K562 (cell line): ENCODE measurements at regions of chr12 and their contacts with region 1.

Region 1: DNA sequence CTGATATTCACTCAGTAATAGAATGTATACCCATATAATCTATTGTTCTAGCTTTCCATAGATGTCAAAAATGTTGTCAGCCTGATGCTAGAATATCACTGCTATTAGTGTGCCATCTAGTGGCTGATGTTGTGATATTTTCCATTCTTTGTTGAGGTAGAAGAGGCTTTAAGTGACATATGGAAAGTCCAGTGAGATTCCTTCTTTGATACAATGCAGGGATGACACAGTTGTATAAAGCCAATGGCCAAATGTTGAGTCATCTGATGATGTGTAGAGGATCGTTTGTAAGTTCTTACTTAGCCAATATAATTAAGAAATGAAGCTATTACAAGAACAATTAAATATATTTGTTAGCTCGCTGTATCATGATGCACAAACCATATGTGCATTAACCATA is 58.1 kb upstream of the PCED1B start:
- DNase-seq: peak; percentile 30 to 59 (median 34)
- ATAC-seq: peak; percentile 81
- H3K4me3 ChIP-seq: no peak overlapping the region
- H3K27ac ChIP-seq: no peak overlapping the region
- H3K4me1 ChIP-seq: no peaks in the 10 kb centered on the region
- H3K27me3 ChIP-seq: 0 out of 5 replicates have a peak, but pooled peaks cover 0 to 4% of the 10 kb centered on the region in 2 experiments
- CTCF ChIP-seq: peak; percentile 41 to 74 (median 64); a peak in 5 of 6 replicates
- EP300 ChIP-seq: no peak
- POLR2A ChIP-seq: no peak
- RAD21 ChIP-seq: peak; percentile 75 to 89

Region 2: GRCh38 chr12:46071769-46072624 is 949.3 kb before region 1 on chr12:
- CTCF ChIA-PET with region 1: no interaction called
- POLR2A ChIA-PET with region 1: no interaction called
- in situ Hi-C with region 1: no loop called
- intact Hi-C with region 1: loop called (anchors 5 kb)
- DNase-seq: peak; percentile 52 to 78 (median 62)
- ATAC-seq: peak; percentile 99
- H3K4me3 ChIP-seq: no peak overlapping the region
- H3K27ac ChIP-seq: no peak overlapping the region
- H3K4me1 ChIP-seq: no peaks in the 10 kb centered on the region
- H3K27me3 ChIP-seq: no peaks in the 10 kb centered on the region
- CTCF ChIP-seq: peak; percentile 94 to 97 (median 96)
- EP300 ChIP-seq: no peak
- POLR2A ChIP-seq: no peak
- RAD21 ChIP-seq: peak; percentile 91 to 92

Region 3: DNA sequence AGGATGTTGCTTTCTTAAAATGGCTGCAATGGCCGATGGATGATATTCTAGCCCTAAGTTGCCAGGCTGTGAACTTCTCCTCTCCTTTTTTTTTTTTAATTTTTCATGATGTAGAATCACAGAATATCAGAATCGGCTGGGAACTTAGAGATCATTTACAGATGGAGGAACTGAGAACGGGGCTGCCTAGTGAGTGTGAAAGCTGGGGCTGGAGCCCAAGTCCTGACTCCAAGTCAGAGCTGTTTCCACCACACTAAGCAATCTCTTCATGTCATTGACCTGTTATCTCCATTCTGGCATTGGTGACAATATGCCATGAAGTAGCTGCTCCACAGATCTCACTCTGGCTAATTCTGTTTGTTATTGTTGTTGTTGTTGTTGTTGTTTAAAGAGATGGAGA is 874.2 kb before region 1 on chr12:
- CTCF ChIA-PET with region 1: no interaction called
- POLR2A ChIA-PET with region 1: no interaction called
- in situ Hi-C with region 1: loop called (anchors 25 kb)
- intact Hi-C with region 1: loop called (anchors 10 kb)
- DNase-seq: no peak
- ATAC-seq: no peak
- H3K4me3 ChIP-seq: no peak overlapping the region
- H3K27ac ChIP-seq: no peak overlapping the region
- H3K4me1 ChIP-seq: no peaks in the 10 kb centered on the region
- H3K27me3 ChIP-seq: peaks cover 9 to 19% of the 10 kb centered on the region in 2 experiments; a peak in 3 of 5 replicates
- CTCF ChIP-seq: no peak
- EP300 ChIP-seq: no peak
- POLR2A ChIP-seq: no peak
- RAD21 ChIP-seq: no peak

Region 4: DNA sequence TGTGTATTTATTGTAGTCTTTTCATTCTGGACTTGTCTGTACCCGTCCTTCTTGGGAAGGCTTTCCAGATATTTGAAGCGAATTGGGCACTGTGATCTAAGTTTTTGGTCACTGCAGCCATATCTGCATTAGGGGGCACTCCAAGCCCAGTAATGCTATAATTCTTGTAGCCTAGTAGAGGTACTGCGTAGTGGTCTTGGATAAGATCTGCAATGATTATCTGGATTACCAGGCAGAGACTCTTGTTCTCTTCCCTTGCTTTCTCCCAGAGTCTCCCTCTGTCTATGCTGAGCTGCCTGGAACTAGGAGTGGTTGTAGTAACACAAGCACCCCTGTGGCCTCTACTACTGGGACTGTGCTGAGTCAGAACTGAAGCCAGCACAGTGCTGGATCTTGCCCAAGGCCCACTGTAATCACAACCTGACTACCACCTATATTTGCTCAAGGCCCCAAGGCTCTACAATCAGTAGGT is 678.7 kb before region 1 on chr12:
- CTCF ChIA-PET with region 1: no interaction called
- POLR2A ChIA-PET with region 1: interaction called, 4 read pairs
- in situ Hi-C with region 1: loop called (anchors 25 kb)
- intact Hi-C with region 1: loop called (anchors 5 kb)
- DNase-seq: peak in 1 of 4 experiments; percentile 33
- ATAC-seq: peak; percentile 89
- H3K4me3 ChIP-seq: no peak overlapping the region
- H3K27ac ChIP-seq: no peak overlapping the region
- H3K4me1 ChIP-seq: no peaks in the 10 kb centered on the region
- H3K27me3 ChIP-seq: peaks cover 0 to 3% of the 10 kb centered on the region in 2 experiments; a peak in 1 of 5 replicates
- CTCF ChIP-seq: peak; percentile 52 to 61 (median 52); a peak in 3 of 6 replicates
- EP300 ChIP-seq: no peak
- POLR2A ChIP-seq: no peak
- RAD21 ChIP-seq: peak; percentile 62 to 92

Region 5: DNA sequence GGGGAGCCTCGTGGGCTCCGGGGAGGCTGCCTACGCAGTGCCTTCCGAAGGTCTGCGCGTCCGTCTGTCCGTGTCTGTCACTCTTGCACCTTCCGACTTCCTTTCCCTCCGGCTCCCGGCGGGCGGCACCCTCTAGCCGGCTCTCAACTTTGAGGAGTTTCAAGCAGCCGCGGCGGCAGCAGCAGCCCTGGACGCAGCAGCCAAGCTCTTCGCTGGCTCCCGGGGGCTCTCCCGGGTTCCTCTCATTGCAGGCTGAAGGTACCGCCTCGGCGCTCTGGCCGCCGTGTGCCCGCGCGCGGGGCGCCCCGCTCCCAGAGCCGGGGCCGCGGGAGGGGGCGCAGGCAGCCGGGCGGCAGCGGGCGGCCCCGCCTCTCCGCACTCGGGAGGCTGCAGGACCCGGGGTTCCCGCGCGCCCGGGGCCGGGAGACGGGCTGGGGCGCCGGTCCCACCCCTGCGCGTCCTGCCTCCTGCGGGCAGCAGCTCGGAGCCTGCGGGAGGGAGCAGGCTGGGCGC is 58.2 kb after region 1 on chr12 and contains the starts of genes AMIGO2 and PCED1B:
- CTCF ChIA-PET with region 1: no interaction called
- POLR2A ChIA-PET with region 1: no interaction called
- in situ Hi-C with region 1: no loop called
- intact Hi-C with region 1: no loop called
- DNase-seq: peak; percentile 41 to 89 (median 63)
- ATAC-seq: peak; percentile 90
- H3K4me3 ChIP-seq: peak within 1 kb of the TSS; percentile 53
- H3K27ac ChIP-seq: peak within 1 kb of the TSS; percentile 54
- H3K4me1 ChIP-seq: peaks cover 13 to 19% of the 10 kb centered on the region in 2 experiments
- H3K27me3 ChIP-seq: no peaks in the 10 kb centered on the region; a peak in 1 of 5 replicates
- CTCF ChIP-seq: peak; percentile 69 to 84 (median 72)
- EP300 ChIP-seq: no peak; the same call in 1 of the 2 replicates
- POLR2A ChIP-seq: no peak; the same call in 1 of the 2 replicates
- RAD21 ChIP-seq: peak; percentile 82 to 88
- polyA plus RNA-seq, gene AMIGO2: 2.0 to 4.1 TPM
- polyA plus RNA-seq, gene PCED1B: 1.2 to 1.5 TPM

Region 6: GRCh38 chr12:47190271-47190750 is 169.0 kb after region 1 on chr12:
- CTCF ChIA-PET with region 1: no interaction called
- POLR2A ChIA-PET with region 1: no interaction called
- in situ Hi-C with region 1: no loop called
- intact Hi-C with region 1: no loop called
- DNase-seq: no peak
- ATAC-seq: no peak
- H3K4me3 ChIP-seq: no peak overlapping the region
- H3K27ac ChIP-seq: no peak overlapping the region
- H3K4me1 ChIP-seq: peaks cover 3 to 49% of the 10 kb centered on the region in 2 experiments; a peak in 4 of 5 replicates
- H3K27me3 ChIP-seq: no peaks in the 10 kb centered on the region
- CTCF ChIP-seq: 0 out of 6 replicates have a peak, but pooled peaks of 1 of the 3 experiments have one; percentile 5
- EP300 ChIP-seq: no peak
- POLR2A ChIP-seq: no peak
- RAD21 ChIP-seq: peak in 1 of 2 experiments; percentile 31; a peak in 1 of 4 replicates